ENCODE measurements at regions of chr9 and their contacts with region 1.

Region 1: GRCh38 chr9:112486221-112487007 is at the start of gene KIAA1958:
- DNase-seq: peak; percentile 91
- H3K4me3 Mint-ChIP-seq: peak within 1 kb of the TSS; percentile 90
- H3K27ac Mint-ChIP-seq: peak within 1 kb of the TSS; percentile 81
- H3K4me1 Mint-ChIP-seq: peaks cover 22% of the 10 kb centered on the region
- H3K27me3 Mint-ChIP-seq: no peaks in the 10 kb centered on the region
- total RNA-seq, gene KIAA1958: 6.1 to 6.5 TPM

Region 2: GRCh38 chr9:112717661-112718341 is 231.4 kb after region 1 on chr9 and contains the start of gene INIP:
- CTCF ChIA-PET with region 1: interaction called, 3 read pairs
- POLR2A ChIA-PET with region 1: interaction called, 6 read pairs
- intact Hi-C with region 1: loop called (anchors 1 kb)
- DNase-seq: peak; percentile 99
- H3K4me3 Mint-ChIP-seq: peak within 1 kb of the TSS; percentile 90
- H3K27ac Mint-ChIP-seq: peak within 1 kb of the TSS; percentile 93
- H3K4me1 Mint-ChIP-seq: peaks cover 35% of the 10 kb centered on the region
- H3K27me3 Mint-ChIP-seq: no peaks in the 10 kb centered on the region
- total RNA-seq, gene INIP: 35.1 to 37.8 TPM

Measured in activated CD4-positive, alpha-beta memory T cell treated with anti-CD3 and anti-CD28 coated beads for 36 hours (primary cell).